PC-9 (cell line): ENCODE measurements at regions of chr19 and their contacts with region 1.

Region 1: DNA sequence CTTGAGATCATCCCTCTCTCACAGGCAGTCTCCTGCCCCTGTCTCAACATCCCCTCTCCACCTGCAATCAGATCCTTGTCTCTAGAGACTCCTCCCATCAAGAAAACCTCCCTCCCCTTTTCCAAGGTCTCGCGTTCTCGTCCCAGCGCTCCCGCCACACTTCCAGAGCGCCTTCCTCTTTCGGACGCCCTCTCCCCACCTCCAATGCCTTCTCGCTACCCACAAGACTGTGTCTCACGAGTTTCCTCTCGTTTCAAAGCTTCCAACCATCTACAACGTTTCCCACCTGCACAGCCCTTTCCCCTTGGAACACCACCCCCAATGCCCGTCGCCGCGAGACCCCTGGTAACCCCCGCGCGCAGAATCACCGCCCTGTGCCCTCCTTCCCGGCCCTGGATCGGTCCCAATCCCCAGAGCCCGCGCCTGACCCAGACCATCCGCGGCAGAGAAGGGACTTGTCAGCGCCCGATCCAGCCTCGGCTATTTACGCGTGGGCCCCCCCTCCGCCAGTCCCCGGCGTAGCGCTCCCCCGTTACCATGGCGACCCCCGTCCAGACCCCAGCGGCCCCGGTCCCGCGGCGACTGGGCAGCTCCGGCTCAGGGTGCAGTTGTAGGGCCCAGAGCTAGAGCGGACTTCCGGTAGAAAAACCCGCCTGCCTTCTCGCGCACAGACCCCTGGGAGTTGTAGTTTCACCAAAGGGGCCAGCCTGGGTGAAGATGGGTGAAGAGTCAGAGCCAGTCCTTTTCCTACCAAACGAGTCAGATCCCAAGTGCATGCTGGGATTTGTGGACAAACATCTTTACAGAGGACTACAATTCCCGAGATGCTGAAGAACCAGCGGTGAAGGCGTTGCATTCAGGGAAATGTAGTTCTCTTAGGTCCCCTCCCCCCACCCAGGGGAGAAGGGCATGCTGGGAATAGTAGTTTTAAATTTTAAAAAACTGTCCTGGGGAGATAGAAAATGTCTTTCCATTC is at the start of gene AP2S1:
- DNase-seq: peak; percentile 95 to 100
- H3K4me3 ChIP-seq: peak within 1 kb of the TSS; percentile 75
- H3K27ac ChIP-seq: peak within 1 kb of the TSS; percentile 72
- H3K4me1 ChIP-seq: peaks cover 15% of the 10 kb centered on the region
- H3K27me3 ChIP-seq: no peaks in the 10 kb centered on the region
- CTCF ChIP-seq: no peak
- total RNA-seq, gene AP2S1: 332 and 411 TPM in 2 replicates

Region 2: DNA sequence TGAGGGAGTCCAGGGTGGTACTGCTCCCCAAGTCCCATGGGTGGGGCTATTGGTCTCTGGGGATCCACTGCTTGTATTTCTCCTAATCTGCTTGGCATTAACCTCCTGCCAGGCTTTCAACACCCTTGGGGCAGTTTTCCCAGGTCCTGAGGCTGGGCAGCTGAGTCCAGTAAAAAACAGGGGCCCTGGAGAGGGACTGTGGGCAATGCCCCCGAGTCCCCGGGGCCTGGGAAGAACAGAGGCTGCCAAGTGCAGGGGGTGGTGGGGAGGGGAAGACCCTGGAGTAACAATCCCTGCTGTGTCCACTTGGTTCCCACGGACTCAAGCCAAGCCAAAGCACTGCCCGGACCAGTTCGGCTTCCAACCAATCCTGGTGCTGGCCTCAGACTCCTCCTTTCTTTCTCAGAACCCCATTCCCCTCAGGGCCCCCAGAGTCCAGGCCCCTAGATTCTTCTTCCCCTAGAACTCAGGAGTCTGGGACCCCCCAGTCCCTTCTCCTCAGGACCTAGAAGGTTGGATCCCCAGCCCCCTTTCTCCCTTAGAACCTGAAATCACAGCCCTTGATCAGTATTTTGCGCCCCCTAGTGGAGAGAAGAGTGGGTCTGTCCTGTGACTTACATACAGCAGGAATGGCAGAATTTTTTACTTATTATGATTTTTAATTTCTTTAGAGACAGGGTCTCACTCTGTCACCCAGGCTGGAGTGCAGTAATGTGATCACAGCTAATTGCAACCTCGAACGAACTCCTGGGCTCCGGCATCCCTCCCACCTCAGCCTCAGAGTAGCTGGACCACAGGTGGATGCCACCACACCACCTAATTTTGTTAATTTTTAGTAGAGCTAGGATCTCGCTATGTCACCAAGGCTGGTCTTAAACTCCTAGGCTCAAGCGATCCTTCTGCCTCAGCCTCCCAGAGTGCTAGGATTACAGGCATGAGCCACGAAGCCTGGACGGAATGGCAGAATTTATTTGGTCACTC is 1899.0 kb before region 1 on chr19:
- CTCF ChIA-PET with region 1: no interaction called
- POLR2A ChIA-PET with region 1: no interaction called
- intact Hi-C with region 1: no loop called
- DNase-seq: peak; percentile 49 to 56
- H3K4me3 ChIP-seq: no peak overlapping the region
- H3K27ac ChIP-seq: no peak overlapping the region
- H3K4me1 ChIP-seq: peaks cover 11% of the 10 kb centered on the region
- H3K27me3 ChIP-seq: no peaks in the 10 kb centered on the region
- CTCF ChIP-seq: peak; percentile 98

Region 3: GRCh38 chr19:46803555-46803954 is 47.0 kb before region 1 on chr19:
- CTCF ChIA-PET with region 1: interaction called, 17 read pairs
- POLR2A ChIA-PET with region 1: no interaction called
- intact Hi-C with region 1: no loop called
- DNase-seq: no peak
- H3K4me3 ChIP-seq: no peak overlapping the region
- H3K27ac ChIP-seq: no peak overlapping the region
- H3K4me1 ChIP-seq: peaks cover 5% of the 10 kb centered on the region
- H3K27me3 ChIP-seq: no peaks in the 10 kb centered on the region
- CTCF ChIP-seq: no peak

Region 4: GRCh38 chr19:46990991-46991676 is 140.6 kb after region 1 on chr19:
- CTCF ChIA-PET with region 1: no interaction called
- POLR2A ChIA-PET with region 1: no interaction called
- intact Hi-C with region 1: no loop called
- DNase-seq: peak; percentile 61 to 74
- H3K4me3 ChIP-seq: no peak overlapping the region
- H3K27ac ChIP-seq: no peak overlapping the region
- H3K4me1 ChIP-seq: no peaks in the 10 kb centered on the region
- H3K27me3 ChIP-seq: no peaks in the 10 kb centered on the region
- CTCF ChIP-seq: peak; percentile 93

Region 5: DNA sequence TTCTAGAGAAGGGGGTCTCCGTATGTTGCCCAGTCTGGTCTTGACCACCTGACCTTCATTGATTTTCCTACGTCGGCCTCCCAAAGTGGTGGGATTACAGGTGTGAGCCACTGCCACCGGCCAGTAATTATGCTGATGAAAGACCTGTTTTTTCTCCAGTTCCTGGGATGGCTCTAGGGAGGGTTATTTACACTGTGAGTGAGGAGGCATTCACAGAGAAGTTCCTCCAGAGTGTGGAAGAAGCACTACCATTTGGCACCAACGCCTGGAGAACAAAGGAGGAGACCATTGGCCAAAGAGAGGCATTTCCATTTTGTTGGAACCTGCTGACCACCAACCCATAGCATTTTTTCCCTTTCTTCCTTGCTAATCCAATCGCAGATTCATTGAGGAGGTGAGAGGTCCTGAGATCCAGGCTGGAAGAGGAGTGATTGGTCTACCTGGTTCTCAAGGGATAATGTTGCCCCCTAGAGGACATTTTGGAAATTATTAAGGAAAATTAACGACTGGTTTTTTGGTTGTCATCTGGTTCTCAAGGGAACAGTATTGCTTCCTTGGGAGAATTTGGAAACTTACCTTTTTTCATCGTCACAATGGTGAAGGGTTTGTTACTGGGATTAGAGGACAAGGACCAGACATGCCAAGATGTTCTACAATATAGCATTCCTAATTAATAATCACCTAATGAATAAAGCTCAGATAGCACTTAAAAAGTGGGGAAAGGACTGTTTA is 274.6 kb after region 1 on chr19:
- CTCF ChIA-PET with region 1: no interaction called
- POLR2A ChIA-PET with region 1: no interaction called
- intact Hi-C with region 1: loop called (anchors 10 kb)
- DNase-seq: peak; percentile 39 to 75
- H3K4me3 ChIP-seq: no peak overlapping the region
- H3K27ac ChIP-seq: peak overlapping the region; percentile 65
- H3K4me1 ChIP-seq: peaks cover 40% of the 10 kb centered on the region
- H3K27me3 ChIP-seq: no peaks in the 10 kb centered on the region
- CTCF ChIP-seq: peak; percentile 96